Sigmoid colon (tissue), 7 donors: ENCODE measurements at regions of chr1 and their contacts with region 1.

Region 1: GRCh38 chr1:11012250-11013171 is at the start of gene TARDBP:
- DNase-seq: peak; percentile 93
- H3K4me3 ChIP-seq: peak within 1 kb of the TSS; percentile 83 to 100 (median 90)
- H3K27ac ChIP-seq: peak within 1 kb of the TSS; percentile 95 to 99 (median 96)
- H3K4me1 ChIP-seq: peaks cover 0 to 51% (median 34%) of the 10 kb centered on the region in 4 donors
- H3K27me3 ChIP-seq: no peaks in the 10 kb centered on the region
- CTCF ChIP-seq: no peak
- EP300 ChIP-seq: no peak
- POLR2A ChIP-seq: peak; percentile 96 to 98
- total RNA-seq, gene TARDBP: 68.6 to 158 (median 125) TPM

Region 2: DNA sequence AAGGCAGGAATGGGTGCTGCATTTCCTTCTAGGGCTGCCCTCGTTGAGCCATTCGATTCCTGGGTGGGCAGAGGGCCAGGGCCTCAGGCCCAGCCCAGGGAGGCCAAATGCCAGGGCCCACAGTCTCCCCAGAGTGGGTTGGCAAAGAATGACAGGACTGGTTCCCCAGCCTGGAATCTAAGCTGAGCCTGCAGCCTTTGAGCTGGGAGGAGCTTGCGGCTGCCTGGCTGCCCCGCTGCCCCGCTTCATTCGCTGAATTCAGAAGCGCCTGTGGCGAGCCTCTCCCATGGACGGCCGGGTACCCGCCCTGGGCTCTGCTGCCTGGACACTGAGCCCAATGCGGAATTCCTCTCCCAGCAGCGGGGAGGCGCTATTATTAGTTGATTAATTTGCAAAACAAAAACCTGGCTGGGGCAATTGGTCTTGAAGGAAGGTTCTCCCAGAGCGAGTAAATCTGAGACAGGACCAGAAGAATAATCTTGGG is 32.4 kb before region 1 on chr1:
- intact Hi-C with region 1: loop called (anchors 2 kb)
- DNase-seq: peak; percentile 91
- H3K4me3 ChIP-seq: peak overlapping the region; percentile 4 to 35 (median 26)
- H3K27ac ChIP-seq: peak overlapping the region; percentile 76 to 80 (median 80)
- H3K4me1 ChIP-seq: peaks cover 0 to 31% (median 29%) of the 10 kb centered on the region in 4 donors
- H3K27me3 ChIP-seq: no peaks in the 10 kb centered on the region
- CTCF ChIP-seq: peak in 3 of 4 experiments; percentile 14 to 42 (median 20)
- EP300 ChIP-seq: no peak
- POLR2A ChIP-seq: no peak